ENCODE measurements at regions of chr5 and their contacts with region 1.

Region 1: GRCh38 chr5:177454397-177455035 is 7.9 kb downstream of the PRR7 start:
- DNase-seq: peak; percentile 92
- ATAC-seq: peak; percentile 7
- H3K4me3 Mint-ChIP-seq: peak overlapping the region; percentile 81
- H3K27ac Mint-ChIP-seq: no peak overlapping the region
- H3K4me1 Mint-ChIP-seq: peaks cover 36% of the 10 kb centered on the region
- H3K27me3 Mint-ChIP-seq: peaks cover 19% of the 10 kb centered on the region
- CTCF ChIP-seq: peak; percentile 78

Region 2: DNA sequence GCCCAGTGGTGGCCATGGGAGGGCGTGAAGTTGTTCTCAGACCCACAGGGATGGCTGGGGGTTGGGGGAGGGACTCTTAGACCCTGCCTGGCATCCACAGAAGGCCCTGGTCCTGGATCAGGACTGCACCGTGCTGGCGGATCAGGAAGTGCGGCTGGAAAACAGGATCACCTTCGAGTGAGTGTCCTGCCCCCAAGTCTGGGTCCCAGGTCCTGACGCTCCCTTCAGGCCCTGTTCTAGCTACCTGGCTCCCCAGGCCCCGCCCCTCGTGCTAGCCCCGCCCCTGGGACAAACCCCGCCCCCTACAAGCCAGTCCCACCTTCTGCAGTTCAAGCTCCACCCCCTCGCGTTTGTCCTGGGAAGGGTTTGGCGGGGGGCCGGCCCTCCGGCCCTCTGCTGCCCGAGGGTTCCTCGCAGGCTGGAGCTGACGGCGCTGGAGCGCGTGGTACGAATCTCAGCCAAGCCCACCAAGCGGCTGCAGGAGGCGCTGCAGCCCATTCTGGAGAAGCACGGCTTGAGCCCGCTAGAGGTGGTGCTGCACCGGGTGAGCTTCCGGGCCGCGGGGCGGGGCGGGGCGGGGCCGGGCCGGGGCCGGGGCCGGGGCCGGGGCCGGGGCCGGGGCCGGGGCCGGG is 83.9 kb before region 1 on chr5:
- CTCF ChIA-PET with region 1: interaction called, 175 read pairs
- POLR2A ChIA-PET with region 1: interaction called, 8 read pairs
- DNase-seq: peak; percentile 99
- ATAC-seq: peak; percentile 78
- H3K4me3 Mint-ChIP-seq: peak overlapping the region; percentile 49
- H3K27ac Mint-ChIP-seq: peak overlapping the region; percentile 76
- H3K4me1 Mint-ChIP-seq: peaks cover 56% of the 10 kb centered on the region
- H3K27me3 Mint-ChIP-seq: peaks cover 5% of the 10 kb centered on the region
- CTCF ChIP-seq: peak; percentile 45; the same call in 1 of the 2 replicates

Region 3: GRCh38 chr5:177390363-177391300 is 63.9 kb before region 1 on chr5:
- CTCF ChIA-PET with region 1: interaction called, 174 read pairs
- POLR2A ChIA-PET with region 1: interaction called, 11 read pairs
- DNase-seq: peak; percentile 93
- ATAC-seq: peak; percentile 88
- H3K4me3 Mint-ChIP-seq: no peak overlapping the region
- H3K27ac Mint-ChIP-seq: no peak overlapping the region
- H3K4me1 Mint-ChIP-seq: peaks cover 32% of the 10 kb centered on the region
- H3K27me3 Mint-ChIP-seq: peaks cover 31% of the 10 kb centered on the region
- CTCF ChIP-seq: peak; percentile 98

Region 4: DNA sequence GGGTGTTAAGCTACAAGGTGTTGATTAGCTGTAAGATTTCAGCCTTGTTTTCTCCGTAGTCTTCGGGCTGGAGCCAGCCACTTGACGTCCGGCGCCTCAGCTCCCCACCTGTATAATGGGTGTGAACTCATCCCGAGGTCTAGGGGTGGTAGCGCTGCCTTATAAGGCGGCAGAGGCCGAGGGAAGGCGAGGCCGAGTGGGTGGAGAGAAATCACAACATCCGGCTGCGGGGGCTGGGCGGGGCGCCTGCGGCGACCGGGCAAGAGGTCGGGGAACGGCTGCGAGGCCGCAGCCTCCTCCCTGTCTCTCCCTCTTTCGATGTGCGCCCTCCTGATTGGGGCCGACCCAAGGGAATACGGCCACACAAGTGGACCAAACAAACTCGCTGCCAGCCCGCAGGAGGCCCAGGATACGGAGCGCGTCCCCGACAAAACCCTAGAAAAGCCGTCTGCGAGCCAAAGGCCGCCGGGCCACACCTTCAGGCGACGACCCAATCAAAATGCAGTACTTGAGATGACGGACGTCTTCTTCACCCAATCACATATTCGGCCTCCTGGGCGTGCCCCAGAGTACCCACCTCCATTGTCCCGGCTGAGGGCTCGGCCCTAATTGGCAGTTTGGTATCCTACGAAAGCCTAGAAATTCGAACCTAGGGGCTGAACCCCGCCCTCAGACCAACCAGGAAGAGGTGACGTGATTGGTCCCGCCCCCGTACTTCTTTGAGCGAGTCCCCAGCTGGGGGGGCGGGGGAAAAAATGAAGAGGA is 28.5 kb before region 1 on chr5:
- CTCF ChIA-PET with region 1: interaction called, 30 read pairs
- POLR2A ChIA-PET with region 1: interaction called, 14 read pairs
- DNase-seq: peak; percentile 100
- ATAC-seq: peak; percentile 94
- H3K4me3 Mint-ChIP-seq: peak overlapping the region; percentile 84
- H3K27ac Mint-ChIP-seq: peak overlapping the region; percentile 98
- H3K4me1 Mint-ChIP-seq: peaks cover 18% of the 10 kb centered on the region
- H3K27me3 Mint-ChIP-seq: peaks cover 5% of the 10 kb centered on the region
- CTCF ChIP-seq: no peak

Region 5: GRCh38 chr5:177473461-177474001 is 19.0 kb after region 1 on chr5 and contains the start of gene DBN1:
- CTCF ChIA-PET with region 1: interaction called, 33 read pairs
- POLR2A ChIA-PET with region 1: interaction called, 17 read pairs
- DNase-seq: peak; percentile 64
- ATAC-seq: peak; percentile 51
- H3K4me3 Mint-ChIP-seq: peak within 1 kb of the TSS; percentile 76
- H3K27ac Mint-ChIP-seq: peak within 1 kb of the TSS; percentile 69
- H3K4me1 Mint-ChIP-seq: peaks cover 56% of the 10 kb centered on the region
- H3K27me3 Mint-ChIP-seq: no peaks in the 10 kb centered on the region
- CTCF ChIP-seq: no peak
- total RNA-seq, gene DBN1: 267 to 288 TPM (median 269 TPM) in 3 replicates

Region 6: GRCh38 chr5:177491429-177491945 is 37.0 kb after region 1 on chr5:
- CTCF ChIA-PET with region 1: interaction called, 45 read pairs
- POLR2A ChIA-PET with region 1: interaction called, 16 read pairs
- DNase-seq: peak; percentile 93
- ATAC-seq: peak; percentile 57
- H3K4me3 Mint-ChIP-seq: no peak overlapping the region
- H3K27ac Mint-ChIP-seq: peak overlapping the region; percentile 65; the same call in 1 of the 2 replicates
- H3K4me1 Mint-ChIP-seq: peaks cover 27% of the 10 kb centered on the region
- H3K27me3 Mint-ChIP-seq: no peaks in the 10 kb centered on the region
- CTCF ChIP-seq: peak; percentile 100